ENCODE measurements at regions of chr18 and their contacts with region 1.

Region 1: DNA sequence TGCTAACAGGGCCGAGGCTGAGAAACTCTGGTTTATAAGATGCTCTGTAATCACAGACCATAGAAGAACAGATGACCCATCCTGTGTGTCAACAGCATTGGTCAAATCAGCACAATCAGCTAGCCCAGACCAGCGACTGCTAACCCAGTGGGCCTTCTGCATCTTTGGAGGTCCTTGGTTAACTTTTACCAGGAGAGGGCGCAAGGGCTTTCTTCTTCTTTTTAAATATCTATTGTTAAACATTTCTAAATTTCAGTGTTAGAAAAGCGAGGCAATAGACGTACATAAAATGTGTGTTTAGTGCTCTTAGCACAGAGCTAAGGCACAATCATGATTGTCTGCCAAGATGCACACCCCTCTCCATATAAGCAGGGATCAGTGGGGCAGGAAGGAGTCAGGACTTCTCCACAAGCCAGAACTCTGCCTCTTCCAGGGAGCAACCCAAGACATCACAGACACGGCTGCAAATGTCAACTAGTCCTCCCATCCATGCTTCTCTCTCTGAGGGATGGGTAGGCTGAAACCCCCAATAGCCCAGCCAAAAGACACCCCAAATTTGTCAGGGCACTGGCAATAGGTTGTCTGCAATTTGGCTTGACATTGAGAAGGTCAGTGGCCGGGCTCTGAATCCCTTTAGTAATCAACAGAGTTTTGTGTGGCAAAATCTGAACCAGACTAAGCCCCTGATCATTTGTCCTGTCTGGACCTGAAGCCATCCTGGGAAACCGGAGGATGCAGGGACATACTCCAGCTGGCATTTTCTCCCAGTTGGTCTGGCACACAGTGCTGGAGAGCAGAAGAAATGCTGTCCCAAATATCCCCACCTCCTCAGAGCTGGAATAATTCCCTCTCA is 188.2 kb downstream of the BCL2 start:
- DNase-seq: no peak
- ATAC-seq: peak; percentile 84
- H3K4me3 ChIP-seq: no peak overlapping the region
- H3K27ac ChIP-seq: peak overlapping the region; percentile 49
- H3K4me1 ChIP-seq: peaks cover 24% of the 10 kb centered on the region
- H3K27me3 ChIP-seq: no peaks in the 10 kb centered on the region
- CTCF ChIP-seq: peak; percentile 52 to 65 (median 59)
- EP300 ChIP-seq: no peak
- POLR2A ChIP-seq: no peak
- RAD21 ChIP-seq: peak; percentile 76

Region 2: GRCh38 chr18:63063171-63063570 is 68.2 kb before region 1 on chr18:
- CTCF ChIA-PET with region 1: no interaction called
- POLR2A ChIA-PET with region 1: no interaction called
- RAD21 ChIA-PET with region 1: no interaction called
- SMC1A ChIA-PET with region 1: no interaction called
- in situ Hi-C with region 1: no loop called
- intact Hi-C with region 1: no loop called
- DNase-seq: no peak
- ATAC-seq: no peak
- H3K4me3 ChIP-seq: no peak overlapping the region
- H3K27ac ChIP-seq: no peak overlapping the region
- H3K4me1 ChIP-seq: no peaks in the 10 kb centered on the region
- H3K27me3 ChIP-seq: no peaks in the 10 kb centered on the region
- CTCF ChIP-seq: no peak
- EP300 ChIP-seq: no peak
- POLR2A ChIP-seq: no peak
- RAD21 ChIP-seq: no peak

Region 3: DNA sequence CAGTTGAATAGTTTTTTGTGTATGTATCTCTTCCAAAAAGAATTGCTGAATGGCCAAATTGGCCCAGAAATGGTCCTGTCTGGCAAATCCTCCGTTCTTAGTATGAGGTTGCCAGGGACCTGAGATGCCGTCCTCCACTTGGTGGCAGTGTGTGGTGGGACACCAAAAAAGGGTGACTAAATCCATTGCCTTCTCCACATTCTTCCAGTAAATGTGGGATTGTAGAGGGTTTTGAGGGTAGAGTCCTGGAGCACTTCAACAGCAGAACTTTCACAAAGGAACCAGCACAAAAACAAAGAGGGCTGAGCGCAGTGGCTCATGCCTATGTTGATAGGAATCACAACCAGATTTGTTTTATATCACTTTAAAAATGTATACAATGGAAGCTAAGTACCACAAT is 11.7 kb before region 1 on chr18:
- CTCF ChIA-PET with region 1: interaction called, 10 read pairs
- POLR2A ChIA-PET with region 1: interaction called, 3 read pairs
- RAD21 ChIA-PET with region 1: interaction called, 9 read pairs
- SMC1A ChIA-PET with region 1: interaction called, 10 read pairs
- in situ Hi-C with region 1: no loop called
- intact Hi-C with region 1: no loop called
- DNase-seq: no peak
- ATAC-seq: peak; percentile 78
- H3K4me3 ChIP-seq: no peak overlapping the region
- H3K27ac ChIP-seq: no peak overlapping the region
- H3K4me1 ChIP-seq: no peaks in the 10 kb centered on the region
- H3K27me3 ChIP-seq: no peaks in the 10 kb centered on the region
- CTCF ChIP-seq: peak; percentile 49 to 65 (median 52); a peak in 5 of 6 replicates
- EP300 ChIP-seq: no peak
- POLR2A ChIP-seq: no peak
- RAD21 ChIP-seq: peak; percentile 70

Region 4: DNA sequence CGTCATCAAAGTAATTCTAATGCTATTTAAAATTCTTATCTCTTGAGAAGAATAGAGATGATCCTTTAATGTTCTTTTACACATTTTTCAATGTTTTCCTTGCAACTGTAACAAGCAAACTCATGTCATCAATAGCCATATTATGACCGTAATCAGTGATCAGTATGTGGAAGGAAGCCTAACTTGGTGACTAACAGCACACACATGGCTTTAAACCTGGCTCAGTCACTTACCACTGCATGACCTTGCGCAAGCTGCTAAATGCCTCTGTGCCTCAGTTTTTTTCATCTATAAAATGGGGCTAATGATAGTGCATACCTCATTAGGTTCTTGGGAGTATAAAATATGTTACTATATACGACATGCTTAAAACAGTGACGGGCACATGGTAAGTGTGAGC is 38.5 kb after region 1 on chr18:
- CTCF ChIA-PET with region 1: no interaction called
- POLR2A ChIA-PET with region 1: no interaction called
- RAD21 ChIA-PET with region 1: no interaction called
- SMC1A ChIA-PET with region 1: no interaction called
- in situ Hi-C with region 1: no loop called
- intact Hi-C with region 1: no loop called
- DNase-seq: no peak
- ATAC-seq: no peak
- H3K4me3 ChIP-seq: no peak overlapping the region
- H3K27ac ChIP-seq: no peak overlapping the region
- H3K4me1 ChIP-seq: peaks cover 15% of the 10 kb centered on the region
- H3K27me3 ChIP-seq: no peaks in the 10 kb centered on the region
- CTCF ChIP-seq: no peak
- EP300 ChIP-seq: no peak
- POLR2A ChIP-seq: no peak
- RAD21 ChIP-seq: no peak

Region 5: GRCh38 chr18:63207143-63207790 is 75.9 kb after region 1 on chr18:
- CTCF ChIA-PET with region 1: no interaction called
- POLR2A ChIA-PET with region 1: no interaction called
- RAD21 ChIA-PET with region 1: no interaction called
- SMC1A ChIA-PET with region 1: no interaction called
- in situ Hi-C with region 1: no loop called
- intact Hi-C with region 1: no loop called
- DNase-seq: no peak
- ATAC-seq: peak; percentile 64
- H3K4me3 ChIP-seq: peak overlapping the region; percentile 50; the same call in 1 of the 2 replicates
- H3K27ac ChIP-seq: peak overlapping the region; percentile 53
- H3K4me1 ChIP-seq: peaks cover 56% of the 10 kb centered on the region
- H3K27me3 ChIP-seq: no peaks in the 10 kb centered on the region
- CTCF ChIP-seq: no peak
- EP300 ChIP-seq: no peak
- POLR2A ChIP-seq: no peak
- RAD21 ChIP-seq: no peak

Region 6: DNA sequence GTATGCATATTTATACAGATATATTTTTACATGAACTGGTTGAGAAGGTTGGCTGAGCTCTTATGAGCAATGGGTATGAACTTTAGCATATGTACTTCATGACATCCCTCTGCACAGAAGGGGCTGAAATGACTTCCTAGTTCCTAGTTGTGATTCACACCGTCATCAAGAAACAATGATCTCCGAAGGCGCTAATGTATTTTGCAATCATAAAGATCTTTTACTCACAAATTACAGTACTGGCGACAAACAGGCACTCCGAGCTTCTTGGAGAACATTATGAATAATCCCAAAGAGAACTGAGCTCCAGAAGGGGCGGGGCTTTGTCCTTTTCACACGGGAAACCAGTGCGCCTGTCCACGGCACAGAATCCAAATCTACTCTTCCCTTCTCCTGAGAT is 170.1 kb after region 1 on chr18:
- CTCF ChIA-PET with region 1: no interaction called
- POLR2A ChIA-PET with region 1: no interaction called
- RAD21 ChIA-PET with region 1: no interaction called
- SMC1A ChIA-PET with region 1: no interaction called
- in situ Hi-C with region 1: no loop called
- intact Hi-C with region 1: no loop called
- DNase-seq: no peak
- ATAC-seq: no peak
- H3K4me3 ChIP-seq: no peak overlapping the region
- H3K27ac ChIP-seq: peak overlapping the region; percentile 15; the same call in 1 of the 2 replicates
- H3K4me1 ChIP-seq: peaks cover 51% of the 10 kb centered on the region
- H3K27me3 ChIP-seq: no peaks in the 10 kb centered on the region
- CTCF ChIP-seq: no peak
- EP300 ChIP-seq: no peak
- POLR2A ChIP-seq: no peak
- RAD21 ChIP-seq: no peak